ENCODE measurements at regions of chr6 and their contacts with region 1.

Region 1: GRCh38 chr6:4135665-4136353 is 434 bp upstream of the ECI2 start:
- DNase-seq: peak; percentile 89
- H3K4me3 ChIP-seq: peak overlapping the region; percentile 74
- H3K27ac ChIP-seq: peak overlapping the region; percentile 54
- H3K27me3 ChIP-seq: peaks cover 4% of the 10 kb centered on the region
- CTCF ChIP-seq: no peak

Region 2: DNA sequence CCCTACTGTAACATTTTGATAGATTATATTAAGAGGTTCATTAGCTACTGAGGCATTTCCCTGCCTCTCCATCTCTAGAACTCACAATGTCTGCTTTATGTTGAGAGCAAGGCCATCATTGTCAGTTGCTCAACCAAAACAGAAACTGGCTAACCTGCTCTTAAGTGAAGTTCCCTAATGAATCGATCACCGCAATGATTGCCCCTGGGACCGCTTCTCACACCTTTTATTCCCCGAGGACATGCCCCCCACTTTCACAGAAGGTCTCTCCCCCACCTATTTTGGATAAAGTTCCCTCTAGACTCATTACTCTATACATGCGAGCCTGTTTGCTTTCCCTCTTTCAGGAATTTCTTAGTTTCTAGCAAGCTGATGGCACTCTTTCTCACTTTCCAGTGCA is 165.7 kb before region 1 on chr6:
- CTCF ChIA-PET with region 1: no interaction called
- POLR2A ChIA-PET with region 1: no interaction called
- DNase-seq: no peak
- H3K4me3 ChIP-seq: no peak overlapping the region
- H3K27ac ChIP-seq: no peak overlapping the region
- H3K27me3 ChIP-seq: no peaks in the 10 kb centered on the region
- CTCF ChIP-seq: no peak

Region 3: GRCh38 chr6:4078691-4079471 is 56.9 kb before region 1 on chr6 and contains the start of gene FAM217A:
- CTCF ChIA-PET with region 1: no interaction called
- POLR2A ChIA-PET with region 1: interaction called, 16 read pairs
- DNase-seq: no peak
- H3K4me3 ChIP-seq: no peak within 1 kb of the TSS
- H3K27ac ChIP-seq: no peak within 1 kb of the TSS
- H3K27me3 ChIP-seq: no peaks in the 10 kb centered on the region
- CTCF ChIP-seq: no peak
- polyA plus RNA-seq, gene FAM217A: not detected in 2 replicates

Region 4: DNA sequence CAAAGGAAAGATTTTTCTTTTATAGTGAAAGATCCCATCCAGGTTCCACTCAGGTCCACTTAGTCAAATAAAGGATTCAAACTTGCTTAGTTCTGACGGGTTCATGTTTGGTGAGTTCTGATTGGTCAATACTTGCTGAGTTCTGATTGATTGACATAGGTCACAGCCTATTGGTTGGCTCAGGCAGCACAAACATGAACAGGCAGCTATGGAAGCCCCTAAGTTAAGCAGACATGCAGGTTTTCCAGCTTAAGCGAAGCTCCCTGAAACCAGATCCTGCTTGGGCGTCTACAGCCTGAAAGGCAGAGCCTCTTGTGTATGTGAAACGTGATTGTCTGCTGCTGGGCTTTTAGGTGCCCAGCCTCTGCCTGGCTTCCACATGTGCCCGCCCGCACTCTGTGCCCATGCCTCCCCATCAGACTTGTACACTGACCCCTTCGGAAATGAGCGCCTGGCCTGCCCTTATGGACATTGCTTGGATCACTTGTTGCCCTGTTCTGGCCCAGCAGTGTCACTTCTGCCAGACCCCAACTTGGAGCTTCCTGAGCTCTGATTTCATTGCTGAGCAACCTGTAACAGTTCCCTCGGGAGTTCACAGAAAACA is 44.9 kb after region 1 on chr6:
- CTCF ChIA-PET with region 1: no interaction called
- POLR2A ChIA-PET with region 1: interaction called, 11 read pairs
- DNase-seq: peak; percentile 20
- H3K4me3 ChIP-seq: no peak overlapping the region
- H3K27ac ChIP-seq: no peak overlapping the region
- H3K27me3 ChIP-seq: peaks cover 23% of the 10 kb centered on the region
- CTCF ChIP-seq: no peak

Measured in AG04450 (cell line).